Heart right ventricle (tissue), 16 donors: ENCODE measurements at regions of chrX and their contacts with region 1.

Region 1: GRCh38 chrX:14641681-14642655 is 112.6 kb downstream of the GLRA2 start:
- DNase-seq: no peak
- ATAC-seq: no peak
- H3K4me3 ChIP-seq: no peak overlapping the region
- H3K27ac ChIP-seq: no peak overlapping the region
- H3K4me1 ChIP-seq: no peaks in the 10 kb centered on the region
- H3K27me3 ChIP-seq: no peaks in the 10 kb centered on the region
- CTCF ChIP-seq: no peak

Region 2: GRCh38 chrX:14630733-14631132 is 11.2 kb before region 1 on chrX:
- intact Hi-C with region 1: loop called in 1 of 10 experiments (anchors 1 kb)
- DNase-seq: no peak
- ATAC-seq: no peak
- H3K4me3 ChIP-seq: no peak overlapping the region
- H3K27ac ChIP-seq: no peak overlapping the region
- H3K4me1 ChIP-seq: no peaks in the 10 kb centered on the region
- H3K27me3 ChIP-seq: no peaks in the 10 kb centered on the region
- CTCF ChIP-seq: no peak